GM12878 (cell line): ENCODE measurements at regions of chr6 and their contacts with region 1.

Region 1: GRCh38 chr6:7652957-7653356 is 63.0 kb downstream of the SNRNP48 start:
- DNase-seq: no peak
- ATAC-seq: no peak
- H3K4me3 ChIP-seq: no peak overlapping the region
- H3K27ac ChIP-seq: no peak overlapping the region
- H3K4me1 ChIP-seq: peaks cover 9% of the 10 kb centered on the region
- H3K27me3 ChIP-seq: peaks cover 0 to 10% of the 10 kb centered on the region in 2 experiments
- CTCF ChIP-seq: no peak
- EP300 ChIP-seq: no peak
- POLR2A ChIP-seq: no peak
- RAD21 ChIP-seq: no peak

Region 2: DNA sequence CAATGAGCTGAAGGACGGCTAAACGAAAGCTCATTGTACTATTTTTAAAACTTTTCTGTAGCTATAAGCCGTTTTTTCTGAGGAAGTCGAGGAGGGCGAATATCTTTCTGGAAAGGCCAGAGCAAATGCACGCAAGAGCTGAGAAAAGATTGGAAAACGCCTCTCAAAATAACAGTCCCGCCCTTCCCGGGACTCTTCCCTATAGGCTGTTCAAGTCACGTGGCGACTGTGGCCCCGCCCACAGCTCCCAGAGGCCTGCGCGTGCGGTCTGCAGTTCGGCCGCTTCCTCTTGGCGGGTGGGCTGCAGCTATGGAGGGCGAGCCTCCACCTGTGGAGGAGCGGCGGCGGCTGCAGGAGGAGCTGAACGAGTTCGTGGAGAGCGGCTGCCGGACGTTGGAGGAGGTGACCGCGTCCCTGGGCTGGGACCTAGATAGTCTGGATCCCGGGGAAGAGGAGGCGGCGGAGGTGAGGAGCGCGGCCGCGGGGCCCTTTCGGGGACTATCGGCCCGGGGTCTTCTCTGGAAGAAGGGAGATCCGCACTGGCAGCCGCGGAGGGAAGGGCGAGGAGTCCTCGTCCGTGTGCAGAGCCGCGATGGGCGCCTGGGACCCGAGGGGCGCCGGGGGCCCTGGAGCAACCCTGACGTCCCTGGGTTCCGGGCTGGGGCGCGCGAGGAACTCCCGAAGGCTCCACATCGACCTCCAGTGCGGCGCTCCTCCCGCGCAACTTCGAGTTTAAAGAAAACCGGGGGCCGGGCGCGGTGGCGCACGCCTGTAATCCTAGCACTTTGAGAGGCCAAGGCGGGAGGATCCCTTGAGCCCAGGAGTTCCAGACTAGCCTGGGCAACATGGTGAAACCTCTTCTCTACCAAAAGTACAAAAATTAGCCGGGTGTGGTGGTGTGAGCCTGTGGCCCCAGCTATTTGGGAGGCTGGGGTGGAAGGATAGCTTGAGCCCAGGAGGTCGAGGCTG is 62.7 kb before region 1 on chr6 and contains the start of gene SNRNP48:
- CTCF ChIA-PET with region 1: no interaction called
- POLR2A ChIA-PET with region 1: no interaction called
- RAD21 ChIA-PET with region 1: no interaction called
- SMC1A ChIA-PET with region 1: no interaction called
- in situ Hi-C with region 1: no loop called
- intact Hi-C with region 1: no loop called
- DNase-seq: peak; percentile 73
- ATAC-seq: peak; percentile 100
- H3K4me3 ChIP-seq: peak within 1 kb of the TSS; percentile 73
- H3K27ac ChIP-seq: peak within 1 kb of the TSS; percentile 55
- H3K4me1 ChIP-seq: peaks cover 3% of the 10 kb centered on the region; the same call in 1 of the 2 replicates
- H3K27me3 ChIP-seq: no peaks in the 10 kb centered on the region
- CTCF ChIP-seq: no peak
- EP300 ChIP-seq: no peak
- POLR2A ChIP-seq: peak; percentile 95
- RAD21 ChIP-seq: no peak
- polyA plus RNA-seq, gene SNRNP48: 3.2 to 5.0 TPM

Region 3: GRCh38 chr6:7673063-7673536 is 20.1 kb after region 1 on chr6:
- CTCF ChIA-PET with region 1: no interaction called
- POLR2A ChIA-PET with region 1: no interaction called
- RAD21 ChIA-PET with region 1: no interaction called
- SMC1A ChIA-PET with region 1: no interaction called
- in situ Hi-C with region 1: no loop called
- intact Hi-C with region 1: no loop called
- DNase-seq: no peak
- ATAC-seq: no peak
- H3K4me3 ChIP-seq: no peak overlapping the region
- H3K27ac ChIP-seq: no peak overlapping the region
- H3K4me1 ChIP-seq: no peaks in the 10 kb centered on the region
- H3K27me3 ChIP-seq: peaks cover 0 to 3% of the 10 kb centered on the region in 2 experiments; a peak in 2 of 4 replicates
- CTCF ChIP-seq: no peak
- EP300 ChIP-seq: no peak
- POLR2A ChIP-seq: no peak
- RAD21 ChIP-seq: no peak

Region 4: GRCh38 chr6:7687145-7688111 is 34.5 kb after region 1 on chr6:
- CTCF ChIA-PET with region 1: no interaction called
- POLR2A ChIA-PET with region 1: no interaction called
- RAD21 ChIA-PET with region 1: no interaction called
- SMC1A ChIA-PET with region 1: no interaction called
- in situ Hi-C with region 1: no loop called
- intact Hi-C with region 1: loop called (anchors 1 kb)
- DNase-seq: no peak
- ATAC-seq: no peak
- H3K4me3 ChIP-seq: no peak overlapping the region
- H3K27ac ChIP-seq: no peak overlapping the region
- H3K4me1 ChIP-seq: no peaks in the 10 kb centered on the region
- H3K27me3 ChIP-seq: no peaks in the 10 kb centered on the region; a peak in 1 of 4 replicates
- CTCF ChIP-seq: no peak
- EP300 ChIP-seq: no peak
- POLR2A ChIP-seq: no peak
- RAD21 ChIP-seq: no peak

Region 5: GRCh38 chr6:7784706-7785105 is 131.7 kb after region 1 on chr6:
- CTCF ChIA-PET with region 1: no interaction called
- POLR2A ChIA-PET with region 1: no interaction called
- RAD21 ChIA-PET with region 1: no interaction called
- SMC1A ChIA-PET with region 1: no interaction called
- in situ Hi-C with region 1: no loop called
- intact Hi-C with region 1: no loop called
- DNase-seq: peak; percentile 1
- ATAC-seq: peak; percentile 34; the same call in 1 of the 3 replicates
- H3K4me3 ChIP-seq: no peak overlapping the region
- H3K27ac ChIP-seq: no peak overlapping the region
- H3K4me1 ChIP-seq: peaks cover 4% of the 10 kb centered on the region; the same call in 1 of the 2 replicates
- H3K27me3 ChIP-seq: no peaks in the 10 kb centered on the region; a peak in 1 of 4 replicates
- CTCF ChIP-seq: no peak
- EP300 ChIP-seq: no peak
- POLR2A ChIP-seq: no peak
- RAD21 ChIP-seq: no peak